ENCODE measurements at regions of chr2 and their contacts with region 1.

Region 1: GRCh38 chr2:197453161-197453914 is at the start of gene COQ10B:
- DNase-seq: peak; percentile 91 to 98 (median 94)
- ATAC-seq: peak; percentile 98
- H3K4me3 ChIP-seq: peak within 1 kb of the TSS; percentile 97
- H3K27ac ChIP-seq: peak within 1 kb of the TSS; percentile 99
- H3K4me1 ChIP-seq: peaks cover 0 to 3% of the 10 kb centered on the region in 2 experiments; a peak in 3 of 5 replicates
- H3K27me3 ChIP-seq: no peaks in the 10 kb centered on the region
- CTCF ChIP-seq: peak; percentile 15 to 46 (median 22); a peak in 2 of 6 replicates
- EP300 ChIP-seq: peak; percentile 30; the same call in 1 of the 2 replicates
- POLR2A ChIP-seq: peak; percentile 91
- RAD21 ChIP-seq: no peak
- polyA plus RNA-seq, gene COQ10B: 7.2 to 7.7 TPM

Region 2: GRCh38 chr2:197434541-197435513 is 18.5 kb before region 1 on chr2 and contains the start of gene SF3B1:
- CTCF ChIA-PET with region 1: no interaction called
- POLR2A ChIA-PET with region 1: interaction called, 9 read pairs
- in situ Hi-C with region 1: no loop called
- intact Hi-C with region 1: loop called (anchors 1 kb)
- DNase-seq: peak; percentile 88 to 97 (median 90)
- ATAC-seq: peak; percentile 89
- H3K4me3 ChIP-seq: peak within 1 kb of the TSS; percentile 77
- H3K27ac ChIP-seq: peak within 1 kb of the TSS; percentile 98
- H3K4me1 ChIP-seq: peaks cover 14 to 17% of the 10 kb centered on the region in 2 experiments; a peak in 4 of 5 replicates
- H3K27me3 ChIP-seq: no peaks in the 10 kb centered on the region
- CTCF ChIP-seq: no peak
- EP300 ChIP-seq: 0 out of 2 replicates have a peak, but pooled peaks have one; percentile 7
- POLR2A ChIP-seq: peak; percentile 89
- RAD21 ChIP-seq: no peak
- polyA plus RNA-seq, gene SF3B1: 125 to 177 TPM

Region 3: GRCh38 chr2:197442857-197443256 is 10.5 kb before region 1 on chr2:
- CTCF ChIA-PET with region 1: no interaction called
- POLR2A ChIA-PET with region 1: interaction called, 10 read pairs
- in situ Hi-C with region 1: no loop called
- intact Hi-C with region 1: no loop called
- DNase-seq: no peak
- ATAC-seq: no peak
- H3K4me3 ChIP-seq: no peak overlapping the region
- H3K27ac ChIP-seq: no peak overlapping the region
- H3K4me1 ChIP-seq: no peaks in the 10 kb centered on the region; a peak in 2 of 5 replicates
- H3K27me3 ChIP-seq: no peaks in the 10 kb centered on the region
- CTCF ChIP-seq: no peak
- EP300 ChIP-seq: no peak
- POLR2A ChIP-seq: no peak
- RAD21 ChIP-seq: no peak

Region 4: DNA sequence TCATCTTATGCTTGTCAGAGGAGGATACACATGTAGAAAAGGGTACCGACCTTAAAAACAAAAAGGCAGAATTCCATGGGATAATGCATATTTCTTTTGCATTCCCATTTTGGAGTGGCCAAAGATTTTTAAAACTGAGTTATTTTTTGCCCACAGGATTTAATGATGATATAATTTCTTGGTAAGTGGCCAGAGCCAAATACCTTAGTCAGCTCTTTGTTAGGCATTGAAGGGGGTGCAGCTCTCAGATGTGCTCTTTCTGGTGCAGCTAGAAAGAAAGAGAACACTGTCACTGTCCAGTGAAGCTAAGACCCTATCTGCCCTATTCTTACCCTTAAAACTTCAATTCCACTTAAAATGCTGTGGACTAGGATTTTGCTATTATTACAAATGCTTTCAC is 10.8 kb after region 1 on chr2:
- CTCF ChIA-PET with region 1: no interaction called
- POLR2A ChIA-PET with region 1: interaction called, 10 read pairs
- in situ Hi-C with region 1: no loop called
- intact Hi-C with region 1: no loop called
- DNase-seq: no peak
- ATAC-seq: no peak
- H3K4me3 ChIP-seq: no peak overlapping the region
- H3K27ac ChIP-seq: no peak overlapping the region
- H3K4me1 ChIP-seq: no peaks in the 10 kb centered on the region; a peak in 3 of 5 replicates
- H3K27me3 ChIP-seq: no peaks in the 10 kb centered on the region
- CTCF ChIP-seq: no peak
- EP300 ChIP-seq: no peak
- POLR2A ChIP-seq: no peak
- RAD21 ChIP-seq: no peak

Region 5: GRCh38 chr2:197599285-197599965 is 146.1 kb after region 1 on chr2:
- CTCF ChIA-PET with region 1: no interaction called
- POLR2A ChIA-PET with region 1: no interaction called
- in situ Hi-C with region 1: no loop called
- intact Hi-C with region 1: loop called (anchors 5 kb)
- DNase-seq: peak; percentile 12 to 58 (median 32)
- ATAC-seq: peak; percentile 97
- H3K4me3 ChIP-seq: no peak overlapping the region
- H3K27ac ChIP-seq: no peak overlapping the region
- H3K4me1 ChIP-seq: peaks cover 0 to 5% of the 10 kb centered on the region in 2 experiments; a peak in 1 of 5 replicates
- H3K27me3 ChIP-seq: no peaks in the 10 kb centered on the region; a peak in 1 of 5 replicates
- CTCF ChIP-seq: peak; percentile 15 to 44 (median 42); a peak in 4 of 6 replicates
- EP300 ChIP-seq: no peak
- POLR2A ChIP-seq: no peak
- RAD21 ChIP-seq: peak in 1 of 2 experiments; percentile 34; a peak in 1 of 4 replicates